RWPE1 (cell line): ENCODE measurements at regions of chr1 and their contacts with region 1.

Region 1: GRCh38 chr1:245045087-245045881 is 109.5 kb upstream of the KIF26B start:
- DNase-seq: no peak
- H3K27ac ChIP-seq: no peak overlapping the region
- CTCF ChIP-seq: no peak

Region 2: GRCh38 chr1:244603498-244603897 is 441.8 kb before region 1 on chr1:
- CTCF ChIA-PET with region 1: interaction called, 10 read pairs
- POLR2A ChIA-PET with region 1: no interaction called
- DNase-seq: peak; percentile 30
- H3K27ac ChIP-seq: no peak overlapping the region
- CTCF ChIP-seq: peak; percentile 82

Region 3: DNA sequence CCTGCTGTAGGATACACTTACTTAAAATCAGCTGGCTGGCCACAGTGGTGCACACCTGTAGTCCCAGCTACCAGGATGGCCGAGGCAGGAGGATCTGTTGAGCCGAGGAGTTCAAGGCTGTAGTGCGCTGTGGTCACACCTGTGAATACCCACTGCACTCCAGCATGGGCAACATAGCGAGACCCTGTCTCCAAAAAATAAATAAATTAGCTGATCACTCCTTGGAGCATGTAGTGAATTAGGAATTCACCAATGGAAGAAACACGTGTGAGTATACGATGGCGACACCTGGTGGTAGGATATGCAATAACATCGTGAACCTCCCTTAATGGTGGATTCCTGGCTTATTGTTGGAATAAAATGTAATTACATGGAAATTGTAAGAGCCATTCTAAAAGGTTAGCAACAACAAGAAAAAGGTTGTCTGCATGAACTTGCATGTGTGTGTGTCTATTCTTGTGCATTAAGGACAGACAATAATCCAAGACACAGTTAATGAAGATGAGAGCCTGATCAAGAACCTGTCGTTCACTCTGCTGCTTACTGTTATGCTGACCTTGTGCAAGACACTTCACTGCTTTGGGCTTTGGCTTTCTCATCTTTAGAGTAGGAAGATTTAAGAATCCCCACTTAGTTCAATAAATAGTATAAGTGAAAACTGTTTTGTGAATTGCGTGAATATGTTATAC is 248.4 kb before region 1 on chr1:
- CTCF ChIA-PET with region 1: interaction called, 11 read pairs
- POLR2A ChIA-PET with region 1: no interaction called
- DNase-seq: peak; percentile 48
- H3K27ac ChIP-seq: no peak overlapping the region
- CTCF ChIP-seq: peak; percentile 84

Region 4: DNA sequence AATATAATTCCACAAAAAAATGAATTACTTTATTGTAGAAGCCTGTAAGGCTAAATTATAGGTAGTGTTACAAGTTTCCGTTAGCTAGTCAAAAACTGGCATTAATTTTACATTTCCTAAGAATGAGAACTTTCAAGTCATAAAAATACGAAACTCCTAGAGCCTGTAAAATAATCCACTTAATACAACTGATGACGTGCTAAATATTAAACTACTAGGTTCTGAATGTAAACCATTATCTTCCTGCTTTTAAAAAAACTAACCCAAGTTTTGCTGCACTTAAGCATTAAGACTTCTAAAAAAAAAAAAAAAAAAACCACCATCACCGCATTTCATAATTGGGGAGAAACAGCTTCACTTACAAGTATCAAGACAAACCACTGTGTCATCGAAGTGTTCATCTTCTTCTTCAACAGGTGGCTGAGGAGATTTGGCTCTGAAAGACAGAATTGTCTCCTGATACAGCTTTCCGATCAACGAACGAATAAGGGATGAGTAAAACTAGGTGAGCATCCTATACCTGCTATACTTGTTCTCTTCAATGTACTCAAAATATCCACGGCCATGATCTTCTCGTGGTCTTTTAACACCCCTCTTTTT is 183.1 kb before region 1 on chr1:
- CTCF ChIA-PET with region 1: interaction called, 10 read pairs
- POLR2A ChIA-PET with region 1: no interaction called
- DNase-seq: no peak
- H3K27ac ChIP-seq: peak overlapping the region; percentile 97; the same call in 1 of the 2 replicates
- CTCF ChIP-seq: no peak

Region 5: DNA sequence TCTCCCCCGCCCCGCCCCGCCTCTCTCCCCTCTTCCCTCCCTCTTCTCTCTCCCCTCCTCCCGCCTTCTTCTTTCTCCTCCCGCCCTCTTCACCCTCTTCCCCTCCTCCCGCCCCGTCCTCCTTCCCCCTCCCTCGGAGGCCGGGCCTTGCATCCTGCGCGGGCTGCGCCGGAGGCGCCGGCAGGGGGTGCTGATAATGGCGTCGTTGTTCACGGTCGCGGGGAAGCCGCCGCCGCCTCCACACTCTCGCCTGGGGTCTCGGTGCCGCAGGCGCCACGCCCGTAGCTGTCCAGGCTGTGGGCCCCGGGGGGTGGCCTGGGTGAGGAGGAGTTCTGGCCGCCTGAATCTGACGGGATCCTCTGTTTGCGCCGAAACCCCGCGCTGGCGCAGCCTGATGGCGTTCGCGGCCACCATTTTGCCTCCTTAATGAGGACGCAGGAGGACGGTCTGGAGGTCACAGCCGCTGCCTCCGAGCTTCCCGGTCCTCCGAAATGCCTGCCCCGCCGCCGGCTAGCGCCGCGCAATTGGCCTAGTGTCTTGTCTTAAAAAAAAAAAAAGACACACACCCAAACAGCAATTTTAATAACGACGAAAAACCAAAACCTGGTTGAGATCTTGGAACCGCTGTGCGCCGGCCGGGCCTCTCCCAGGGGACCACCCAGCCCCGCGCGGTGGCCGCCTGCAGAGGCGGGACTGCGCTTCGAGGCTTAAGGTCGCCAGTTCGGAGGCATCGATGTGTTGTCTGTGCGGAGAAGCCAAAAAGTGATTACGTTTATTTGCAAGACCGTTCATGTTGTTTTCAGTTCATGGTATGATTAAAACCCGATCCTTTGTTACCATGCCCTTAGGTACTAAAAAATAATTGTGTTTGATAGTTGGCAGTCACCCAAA is 74.4 kb before region 1 on chr1:
- CTCF ChIA-PET with region 1: interaction called, 20 read pairs
- POLR2A ChIA-PET with region 1: no interaction called
- DNase-seq: peak; percentile 75
- H3K27ac ChIP-seq: peak overlapping the region; percentile 100
- CTCF ChIP-seq: peak; percentile 69

Region 6: DNA sequence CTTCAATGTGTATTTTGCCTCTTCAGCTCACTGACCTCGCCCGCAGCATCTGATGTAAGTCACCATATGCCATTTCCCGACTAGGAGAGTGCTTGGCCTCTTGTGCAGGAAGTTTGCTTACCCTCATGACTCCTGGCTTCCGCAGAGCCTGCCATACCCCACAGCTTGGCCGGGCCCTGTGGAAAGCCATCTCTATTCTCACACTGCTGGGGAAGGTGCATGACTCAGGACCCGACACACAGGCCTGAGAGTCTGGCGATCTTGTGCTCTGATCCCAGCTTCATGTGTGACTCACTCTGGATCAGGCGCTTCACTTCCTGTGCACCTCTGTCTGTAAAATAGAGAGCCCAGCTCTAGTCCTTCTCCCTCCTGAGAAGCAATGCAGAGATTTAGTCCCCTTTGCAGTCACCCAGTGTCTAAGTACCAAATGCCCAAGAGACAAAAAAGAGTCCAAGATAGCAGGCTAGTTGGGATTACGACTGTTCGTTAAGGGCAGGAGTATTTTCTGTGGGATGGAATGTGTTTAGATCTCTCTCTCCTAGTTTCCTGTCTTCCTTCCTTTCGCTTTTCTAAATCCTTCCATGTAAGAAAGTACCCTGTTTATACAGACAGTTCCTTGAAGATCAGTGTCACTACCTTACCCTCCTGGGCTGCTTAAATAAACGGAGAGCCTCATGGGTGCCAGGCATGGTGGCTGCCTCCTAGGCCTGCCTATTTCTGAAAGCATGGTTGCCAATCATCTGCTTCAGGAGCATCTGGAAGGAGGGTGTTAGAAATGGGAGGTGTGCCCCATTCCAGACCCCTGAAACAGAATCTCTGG is 46.7 kb after region 1 on chr1:
- CTCF ChIA-PET with region 1: no interaction called
- POLR2A ChIA-PET with region 1: no interaction called
- DNase-seq: peak; percentile 88
- H3K27ac ChIP-seq: peak overlapping the region; percentile 85
- CTCF ChIP-seq: no peak